Posterior cingulate gyrus (tissue), 11 donors: ENCODE measurements at regions of chr16 and their contacts with region 1.

Region 1: DNA sequence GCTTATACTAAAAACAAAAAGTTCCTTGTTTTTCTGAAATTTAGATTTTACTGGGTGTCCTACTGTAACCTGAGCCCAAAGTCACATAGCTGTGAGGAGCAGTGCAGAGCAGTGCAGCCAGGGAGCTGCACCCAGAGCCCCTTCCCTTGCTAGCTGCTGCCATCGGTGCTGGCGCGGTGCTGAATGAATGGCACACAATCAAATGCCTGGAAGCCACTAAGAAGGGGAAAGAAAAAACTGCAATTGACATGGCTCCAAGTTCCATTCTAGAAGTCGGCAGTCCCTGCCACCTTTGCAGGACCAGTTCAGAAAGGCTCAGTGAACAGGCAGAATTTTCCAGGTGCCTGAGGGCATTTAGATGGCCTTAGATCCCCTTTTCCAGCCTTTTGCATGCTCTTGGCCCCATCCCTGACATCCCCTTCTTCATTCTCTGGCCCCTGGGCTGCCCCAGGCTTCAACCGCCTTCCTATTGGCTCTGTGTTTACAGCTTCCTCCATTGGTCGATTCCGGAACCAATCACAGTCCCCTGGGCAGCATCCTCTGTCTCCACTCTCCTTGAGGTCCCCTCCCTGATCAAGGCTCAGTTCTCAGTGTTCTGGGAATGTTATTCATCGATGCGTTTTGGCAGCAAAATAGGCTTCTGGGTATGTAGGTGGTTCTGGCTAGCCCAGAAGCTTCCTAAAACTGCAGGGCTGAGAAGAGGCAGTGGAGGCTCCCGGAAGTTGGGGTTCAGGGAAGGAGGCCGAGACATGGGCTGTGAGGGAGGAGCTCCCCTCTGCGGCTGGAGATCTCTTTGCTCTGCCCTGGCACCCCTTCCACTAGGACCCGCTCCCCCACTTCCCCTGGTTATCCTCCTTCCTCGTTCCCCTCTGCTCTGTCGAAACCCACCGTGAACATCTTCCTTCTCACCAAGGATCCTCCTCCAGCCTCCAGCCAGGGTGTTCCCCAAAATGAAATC is 37.9 kb downstream of the ATP2C2 start:
- DNase-seq: peak; percentile 69 to 97 (median 82)

Region 2: GRCh38 chr16:84175350-84176081 is 230.8 kb before region 1 on chr16:
- intact Hi-C with region 1: no loop called
- DNase-seq: peak in 4 of 10 donors; percentile 45 to 74 (median 59)

Region 3: GRCh38 chr16:84277237-84277823 is 129.0 kb before region 1 on chr16:
- intact Hi-C with region 1: loop called (anchors 1 kb)
- DNase-seq: peak; percentile 46 to 96 (median 80)

Region 4: GRCh38 chr16:84357191-84357651 is 49.1 kb before region 1 on chr16:
- intact Hi-C with region 1: loop called (anchors 5 kb)
- DNase-seq: peak in 2 of 10 donors; percentile 30 to 80

Region 5: GRCh38 chr16:84484579-84485254 is 78.4 kb after region 1 on chr16:
- intact Hi-C with region 1: loop called (anchors 5 kb)
- DNase-seq: peak; percentile 53 to 96 (median 82)